Astrocyte of the cerebellum (primary cell): ENCODE measurements at regions of chr1 and their contacts with region 1.

Region 1: DNA sequence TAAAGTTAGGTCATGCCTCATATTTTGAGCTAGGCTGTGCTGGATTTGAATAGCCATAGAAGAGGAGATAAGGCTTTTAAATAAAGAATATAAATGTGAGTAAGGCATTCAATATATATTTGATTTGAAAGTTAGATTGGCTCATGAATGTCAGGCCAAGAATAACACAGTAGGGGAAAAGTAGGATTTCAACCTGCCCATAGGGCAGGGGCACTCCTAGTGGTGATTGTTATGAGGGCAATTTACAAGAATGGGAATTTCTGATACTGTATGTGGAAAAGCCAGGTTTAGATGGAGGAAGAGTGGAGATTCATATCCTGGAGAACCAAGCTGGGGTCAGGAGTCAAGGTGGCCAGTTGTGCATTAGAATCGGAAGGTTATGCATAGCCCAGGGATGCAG is 74.9 kb downstream of the DNAH14 start:
- DNase-seq: no peak
- H3K4me3 ChIP-seq: no peak overlapping the region
- CTCF ChIP-seq: peak; percentile 37

Region 2: GRCh38 chr1:224623743-224624333 is 380.6 kb before region 1 on chr1:
- in situ Hi-C with region 1: no loop called
- DNase-seq: peak; percentile 92
- H3K4me3 ChIP-seq: no peak overlapping the region
- CTCF ChIP-seq: no peak

Region 3: GRCh38 chr1:224922404-224923164 is 81.8 kb before region 1 on chr1:
- in situ Hi-C with region 1: no loop called
- DNase-seq: peak; percentile 28
- H3K4me3 ChIP-seq: no peak overlapping the region
- CTCF ChIP-seq: peak; percentile 64

Region 4: DNA sequence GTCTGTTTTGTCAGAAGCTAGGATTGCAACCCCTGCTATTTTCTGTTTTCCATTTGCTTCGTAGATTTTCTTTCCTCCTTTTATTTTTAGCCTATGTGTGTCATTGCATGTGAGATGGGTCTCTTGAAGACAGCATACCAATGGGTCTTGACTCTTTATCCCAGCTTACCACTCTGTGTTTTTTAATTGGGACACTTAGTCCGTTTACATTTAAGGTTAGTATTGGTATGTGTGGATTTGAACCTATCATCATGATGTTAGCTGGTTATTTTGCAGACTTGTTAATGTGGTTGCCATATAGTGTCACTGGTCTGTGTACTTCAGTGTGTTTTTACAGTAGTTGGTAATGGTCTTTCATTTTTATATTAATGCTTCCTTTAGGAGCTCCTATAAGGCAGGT is 66.6 kb after region 1 on chr1:
- in situ Hi-C with region 1: loop called (anchors 5 kb)
- DNase-seq: no peak
- H3K4me3 ChIP-seq: no peak overlapping the region
- CTCF ChIP-seq: no peak